Naive thymus-derived CD4-positive, alpha-beta T cell (primary cell): ENCODE measurements at regions of chr22 and their contacts with region 1.

Region 1: GRCh38 chr22:23210428-23211170 is 30.3 kb downstream of the BCR start:
- DNase-seq: no peak
- ATAC-seq: no peak
- H3K4me3 ChIP-seq: no peak overlapping the region
- H3K4me3 Mint-ChIP-seq: no peak overlapping the region
- H3K27ac ChIP-seq: no peak overlapping the region
- H3K27ac Mint-ChIP-seq: peak overlapping the region in 8 of 9 donors; percentile 2 to 72 (median 47)
- H3K4me1 ChIP-seq: peaks cover 0 to 12% of the 10 kb centered on the region in 2 donors
- H3K4me1 Mint-ChIP-seq: peaks cover 23 to 81% (median 64%) of the 10 kb centered on the region in 7 donors
- H3K27me3 ChIP-seq: no peaks in the 10 kb centered on the region
- H3K27me3 Mint-ChIP-seq: no peaks in the 10 kb centered on the region

Region 2: DNA sequence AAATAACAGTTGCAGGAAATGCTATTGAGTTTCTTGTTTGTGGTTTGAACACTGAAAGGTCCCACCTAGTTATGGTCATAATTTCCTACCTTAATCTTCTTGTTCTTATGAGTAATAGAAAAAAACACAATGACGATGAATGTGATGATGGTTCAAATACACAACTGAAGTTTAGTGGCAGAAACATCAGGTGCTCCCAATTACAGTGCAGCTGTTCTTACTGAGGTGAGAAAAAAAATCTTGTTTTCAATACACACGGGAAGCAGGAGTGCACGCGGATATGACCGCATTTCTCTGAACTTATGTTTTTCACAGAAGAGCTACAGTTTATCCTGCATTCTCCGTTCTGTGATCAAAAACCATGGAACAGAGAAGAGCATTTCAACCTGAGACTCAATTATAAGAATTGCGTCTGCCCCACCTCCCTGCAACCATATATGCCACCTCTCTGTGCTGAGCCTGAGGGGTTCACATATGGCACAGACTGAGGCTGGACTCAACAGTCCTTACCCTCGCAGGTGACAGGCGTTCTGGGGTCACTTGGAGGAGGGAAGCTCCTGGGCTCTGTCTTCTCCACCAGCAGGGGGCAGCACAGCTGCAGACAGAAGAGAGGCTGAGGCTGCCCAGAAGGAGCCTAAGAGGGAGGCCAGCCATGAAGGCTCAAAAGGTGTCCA is 422.7 kb before region 1 on chr22:
- CTCF ChIA-PET with region 1: no interaction called
- POLR2A ChIA-PET with region 1: no interaction called
- intact Hi-C with region 1: no loop called
- DNase-seq: peak; percentile 33 to 72 (median 61)
- ATAC-seq: peak; percentile 82
- H3K4me3 ChIP-seq: no peak overlapping the region
- H3K4me3 Mint-ChIP-seq: peak overlapping the region in 1 of 10 donors; percentile 44
- H3K27ac ChIP-seq: no peak overlapping the region
- H3K27ac Mint-ChIP-seq: peak overlapping the region in 4 of 9 donors; percentile 8 to 48 (median 26)
- H3K4me1 ChIP-seq: peaks cover 10 to 56% of the 10 kb centered on the region in 2 donors
- H3K4me1 Mint-ChIP-seq: peaks cover 12 to 44% (median 26%) of the 10 kb centered on the region in 7 donors
- H3K27me3 ChIP-seq: no peaks in the 10 kb centered on the region
- H3K27me3 Mint-ChIP-seq: peaks cover 0 to 13% (median 0%) of the 10 kb centered on the region in 5 donors

Region 3: DNA sequence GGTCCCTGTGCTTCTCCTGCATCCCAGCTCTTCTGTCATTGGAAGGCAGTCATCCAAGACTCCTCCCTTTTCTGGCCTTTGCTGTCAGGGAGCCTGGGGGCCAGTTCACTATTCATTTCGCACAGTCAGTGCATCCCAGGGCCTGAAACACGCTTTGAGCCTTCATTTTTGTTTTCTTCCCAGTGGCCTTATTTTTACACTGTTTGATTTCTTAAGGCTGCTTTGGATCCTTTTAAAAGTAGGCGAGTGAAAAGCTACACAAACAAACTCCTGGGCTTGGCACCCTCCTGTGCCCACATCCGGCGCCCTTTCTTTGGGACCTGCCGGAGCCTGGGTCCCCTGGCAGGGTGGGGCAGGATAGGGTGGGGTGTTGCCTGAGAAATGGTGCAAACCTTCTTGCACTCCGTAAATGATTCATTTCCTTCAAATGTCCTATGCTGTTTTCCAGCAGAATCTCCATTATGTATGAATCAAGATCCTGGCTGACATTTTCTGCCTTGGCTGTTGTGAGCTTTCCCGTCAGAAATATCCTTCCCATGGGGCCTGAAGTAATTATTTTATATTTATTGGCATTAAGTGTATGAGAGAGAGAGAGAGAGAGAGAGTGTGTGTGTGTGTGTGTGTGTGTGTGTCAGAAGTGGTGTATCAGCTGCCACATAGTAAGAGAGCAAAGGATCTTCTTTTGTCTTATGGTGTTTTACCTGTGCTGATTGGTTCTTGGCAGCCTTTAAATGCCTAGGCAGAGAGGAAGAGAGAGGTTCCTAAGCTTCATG is 15.3 kb after region 1 on chr22:
- CTCF ChIA-PET with region 1: interaction called, 3 read pairs
- POLR2A ChIA-PET with region 1: interaction called, 13 read pairs
- intact Hi-C with region 1: loop called in 1 of 2 experiments (anchors 2 kb)
- DNase-seq: peak in 7 of 9 donors; percentile 59 to 84 (median 73)
- ATAC-seq: peak; percentile 81
- H3K4me3 ChIP-seq: no peak overlapping the region
- H3K4me3 Mint-ChIP-seq: peak overlapping the region; percentile 51 to 83 (median 72)
- H3K27ac ChIP-seq: peak overlapping the region; percentile 67
- H3K27ac Mint-ChIP-seq: peak overlapping the region; percentile 69 to 96 (median 82)
- H3K4me1 ChIP-seq: peaks cover 14 to 78% of the 10 kb centered on the region in 2 donors
- H3K4me1 Mint-ChIP-seq: peaks cover 62 to 99% (median 93%) of the 10 kb centered on the region in 7 donors
- H3K27me3 ChIP-seq: no peaks in the 10 kb centered on the region
- H3K27me3 Mint-ChIP-seq: no peaks in the 10 kb centered on the region